ENCODE measurements at regions of chr5 and their contacts with region 1.

Region 1: GRCh38 chr5:146049014-146049703 is 56.2 kb downstream of the PLAC8L1 start:
- DNase-seq: peak; percentile 46
- H3K4me3 ChIP-seq: no peak overlapping the region
- CTCF ChIP-seq: peak; percentile 77

Region 2: GRCh38 chr5:145834917-145835847 is 214.0 kb before region 1 on chr5 and contains the start of gene PRELID2:
- CTCF ChIA-PET with region 1: interaction called, 190 read pairs
- POLR2A ChIA-PET with region 1: no interaction called
- DNase-seq: no peak
- H3K4me3 ChIP-seq: peak within 1 kb of the TSS; percentile 73
- CTCF ChIP-seq: no peak

Region 3: GRCh38 chr5:145840458-145841132 is 208.6 kb before region 1 on chr5:
- CTCF ChIA-PET with region 1: interaction called, 190 read pairs
- POLR2A ChIA-PET with region 1: no interaction called
- DNase-seq: no peak
- H3K4me3 ChIP-seq: no peak overlapping the region
- CTCF ChIP-seq: no peak

Region 4: DNA sequence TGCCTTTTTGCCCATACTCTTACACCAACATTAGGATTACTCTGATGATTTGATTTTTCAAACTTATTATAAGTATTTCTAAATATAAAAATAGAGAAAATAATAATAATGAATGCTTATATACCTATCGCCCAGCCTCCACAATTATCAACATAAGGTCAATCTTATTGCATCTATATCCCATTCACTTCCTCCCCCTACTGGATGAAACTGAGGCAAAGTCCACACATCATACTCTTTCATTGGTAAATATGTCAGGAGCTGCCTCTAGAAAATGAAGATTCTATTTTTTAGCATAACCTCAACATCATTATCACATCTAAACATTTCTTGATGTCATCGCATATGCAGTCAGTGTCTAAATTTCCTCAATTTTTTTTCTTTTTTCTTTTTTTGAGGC is 68.4 kb before region 1 on chr5:
- CTCF ChIA-PET with region 1: no interaction called
- POLR2A ChIA-PET with region 1: no interaction called
- DNase-seq: no peak
- H3K4me3 ChIP-seq: no peak overlapping the region
- CTCF ChIP-seq: no peak

Region 5: GRCh38 chr5:146068206-146068605 is 19.0 kb after region 1 on chr5:
- CTCF ChIA-PET with region 1: interaction called, 11 read pairs
- POLR2A ChIA-PET with region 1: no interaction called
- DNase-seq: no peak
- H3K4me3 ChIP-seq: no peak overlapping the region
- CTCF ChIP-seq: no peak